Naive thymus-derived CD4-positive, alpha-beta T cell (primary cell): ENCODE measurements at regions of chr12 and their contacts with region 1.

Region 1: GRCh38 chr12:24838531-24838950 is 110.4 kb downstream of the BCAT1 start:
- DNase-seq: peak in 1 of 9 donors; percentile 28
- ATAC-seq: peak; percentile 61
- H3K4me3 ChIP-seq: no peak overlapping the region
- H3K4me3 Mint-ChIP-seq: peak overlapping the region in 1 of 10 donors; percentile 61
- H3K27ac ChIP-seq: no peak overlapping the region
- H3K27ac Mint-ChIP-seq: peak overlapping the region in 1 of 9 donors; percentile 46
- H3K4me1 ChIP-seq: no peaks in the 10 kb centered on the region
- H3K4me1 Mint-ChIP-seq: peaks cover 0 to 33% (median 0%) of the 10 kb centered on the region in 7 donors
- H3K27me3 ChIP-seq: no peaks in the 10 kb centered on the region
- H3K27me3 Mint-ChIP-seq: peaks cover 0 to 22% (median 15%) of the 10 kb centered on the region in 5 donors

Region 2: GRCh38 chr12:23204933-23205778 is 1633.4 kb before region 1 on chr12:
- CTCF ChIA-PET with region 1: interaction called, 3 read pairs
- POLR2A ChIA-PET with region 1: no interaction called
- intact Hi-C with region 1: loop called in 1 of 2 experiments (anchors 1 kb)
- DNase-seq: peak in 6 of 9 donors; percentile 5 to 29 (median 24)
- ATAC-seq: peak; percentile 70
- H3K4me3 ChIP-seq: no peak overlapping the region
- H3K4me3 Mint-ChIP-seq: no peak overlapping the region
- H3K27ac ChIP-seq: no peak overlapping the region
- H3K27ac Mint-ChIP-seq: no peak overlapping the region
- H3K4me1 ChIP-seq: no peaks in the 10 kb centered on the region
- H3K4me1 Mint-ChIP-seq: no peaks in the 10 kb centered on the region
- H3K27me3 ChIP-seq: no peaks in the 10 kb centered on the region
- H3K27me3 Mint-ChIP-seq: peaks cover 0 to 6% (median 5%) of the 10 kb centered on the region in 5 donors

Region 3: DNA sequence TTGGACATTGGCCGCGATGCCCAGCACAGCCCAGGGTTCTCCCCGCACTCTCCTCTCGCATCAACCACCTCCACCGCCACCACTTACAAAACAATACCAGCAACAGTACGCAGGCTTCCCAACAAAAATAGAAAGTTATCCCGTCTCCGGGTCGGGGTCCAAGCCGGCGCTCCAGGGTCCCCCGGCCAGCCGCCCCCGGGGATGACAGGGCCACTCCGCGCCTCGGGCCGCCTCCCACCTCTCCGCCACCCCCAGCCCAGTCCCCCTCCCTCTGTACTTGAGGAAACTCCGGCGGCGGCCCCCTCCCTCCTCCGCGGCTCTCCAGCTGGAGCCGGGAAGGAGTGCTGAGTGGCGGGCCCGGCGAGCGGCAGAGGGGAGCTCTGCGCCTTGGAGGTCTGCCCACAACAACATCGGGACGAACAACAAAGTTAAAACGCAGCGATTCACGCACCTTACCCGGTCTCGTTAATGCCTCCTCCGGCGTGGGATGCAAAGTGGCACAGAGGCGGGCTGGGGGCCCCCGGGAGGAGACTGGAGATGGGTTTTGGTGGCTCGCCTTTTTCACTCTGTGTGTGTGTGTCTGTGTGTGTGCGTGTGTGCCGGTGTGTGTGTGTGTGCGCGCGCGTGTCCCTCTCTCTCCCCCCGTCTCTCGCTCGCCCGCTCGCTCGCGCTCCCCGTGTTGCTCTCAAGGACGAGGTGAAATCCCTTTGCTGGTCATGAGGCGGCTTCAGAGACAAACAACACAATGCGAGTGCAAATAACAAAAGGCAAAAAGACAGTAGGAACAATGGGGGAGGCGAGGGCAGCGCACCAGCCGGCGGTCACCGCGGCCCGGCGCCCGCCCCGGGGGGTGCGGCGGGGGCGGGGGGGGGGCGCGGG is 276.4 kb before region 1 on chr12:
- CTCF ChIA-PET with region 1: no interaction called
- POLR2A ChIA-PET with region 1: no interaction called
- intact Hi-C with region 1: loop called in 1 of 2 experiments (anchors 5 kb)
- DNase-seq: peak in 2 of 9 donors; percentile 1 to 31
- ATAC-seq: peak; percentile 20
- H3K4me3 ChIP-seq: peak overlapping the region; percentile 39
- H3K4me3 Mint-ChIP-seq: peak overlapping the region; percentile 63 to 93 (median 82)
- H3K27ac ChIP-seq: no peak overlapping the region
- H3K27ac Mint-ChIP-seq: peak overlapping the region in 1 of 9 donors; percentile 65
- H3K4me1 ChIP-seq: no peaks in the 10 kb centered on the region
- H3K4me1 Mint-ChIP-seq: peaks cover 14 to 31% (median 25%) of the 10 kb centered on the region in 7 donors
- H3K27me3 ChIP-seq: peaks cover 0 to 8% of the 10 kb centered on the region in 2 donors
- H3K27me3 Mint-ChIP-seq: peaks cover 66 to 77% (median 70%) of the 10 kb centered on the region in 5 donors

Region 4: GRCh38 chr12:24798335-24798734 is 40.2 kb before region 1 on chr12:
- CTCF ChIA-PET with region 1: no interaction called
- POLR2A ChIA-PET with region 1: no interaction called
- intact Hi-C with region 1: loop called in 1 of 2 experiments (anchors 5 kb)
- DNase-seq: no peak
- ATAC-seq: no peak
- H3K4me3 ChIP-seq: no peak overlapping the region
- H3K4me3 Mint-ChIP-seq: no peak overlapping the region
- H3K27ac ChIP-seq: no peak overlapping the region
- H3K27ac Mint-ChIP-seq: no peak overlapping the region
- H3K4me1 ChIP-seq: peaks cover 0 to 8% of the 10 kb centered on the region in 2 donors
- H3K4me1 Mint-ChIP-seq: peaks cover 2 to 39% (median 22%) of the 10 kb centered on the region in 7 donors
- H3K27me3 ChIP-seq: no peaks in the 10 kb centered on the region
- H3K27me3 Mint-ChIP-seq: peaks cover 0 to 3% (median 0%) of the 10 kb centered on the region in 5 donors

Region 5: GRCh38 chr12:24902511-24903328 is 64.2 kb after region 1 on chr12:
- CTCF ChIA-PET with region 1: no interaction called
- POLR2A ChIA-PET with region 1: no interaction called
- intact Hi-C with region 1: loop called in 1 of 2 experiments (anchors 1 kb)
- DNase-seq: peak in 3 of 9 donors; percentile 5 to 59 (median 7)
- ATAC-seq: peak; percentile 42
- H3K4me3 ChIP-seq: peak overlapping the region; percentile 37
- H3K4me3 Mint-ChIP-seq: peak overlapping the region in 9 of 10 donors; percentile 60 to 99 (median 78)
- H3K27ac ChIP-seq: no peak overlapping the region
- H3K27ac Mint-ChIP-seq: peak overlapping the region in 1 of 9 donors; percentile 96
- H3K4me1 ChIP-seq: no peaks in the 10 kb centered on the region
- H3K4me1 Mint-ChIP-seq: peaks cover 9 to 41% (median 16%) of the 10 kb centered on the region in 7 donors
- H3K27me3 ChIP-seq: no peaks in the 10 kb centered on the region
- H3K27me3 Mint-ChIP-seq: peaks cover 13 to 39% (median 35%) of the 10 kb centered on the region in 5 donors

Region 6: DNA sequence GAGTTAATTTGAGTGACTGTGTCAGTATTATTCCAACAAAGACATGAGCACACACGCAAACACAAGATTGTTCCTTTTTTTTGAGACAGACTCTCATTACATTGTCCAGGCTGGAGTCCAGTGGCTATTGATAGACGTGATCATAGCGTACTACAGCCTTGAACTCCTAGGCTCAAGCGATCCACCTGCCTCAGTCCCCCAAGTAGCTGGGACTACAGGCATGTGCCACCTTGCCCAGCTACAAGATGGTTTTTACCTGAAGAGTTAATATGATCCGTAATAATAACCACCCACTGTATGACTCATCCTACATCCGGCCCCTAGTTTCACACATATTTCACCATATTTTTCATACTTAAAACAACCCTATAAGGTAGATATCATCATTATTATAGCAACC is 83.5 kb after region 1 on chr12:
- CTCF ChIA-PET with region 1: no interaction called
- POLR2A ChIA-PET with region 1: no interaction called
- intact Hi-C with region 1: no loop called
- DNase-seq: no peak
- ATAC-seq: peak; percentile 38
- H3K4me3 ChIP-seq: no peak overlapping the region
- H3K4me3 Mint-ChIP-seq: no peak overlapping the region
- H3K27ac ChIP-seq: no peak overlapping the region
- H3K27ac Mint-ChIP-seq: no peak overlapping the region
- H3K4me1 ChIP-seq: no peaks in the 10 kb centered on the region
- H3K4me1 Mint-ChIP-seq: peaks cover 0 to 21% (median 0%) of the 10 kb centered on the region in 7 donors
- H3K27me3 ChIP-seq: no peaks in the 10 kb centered on the region
- H3K27me3 Mint-ChIP-seq: peaks cover 0 to 8% (median 0%) of the 10 kb centered on the region in 5 donors

Region 7: DNA sequence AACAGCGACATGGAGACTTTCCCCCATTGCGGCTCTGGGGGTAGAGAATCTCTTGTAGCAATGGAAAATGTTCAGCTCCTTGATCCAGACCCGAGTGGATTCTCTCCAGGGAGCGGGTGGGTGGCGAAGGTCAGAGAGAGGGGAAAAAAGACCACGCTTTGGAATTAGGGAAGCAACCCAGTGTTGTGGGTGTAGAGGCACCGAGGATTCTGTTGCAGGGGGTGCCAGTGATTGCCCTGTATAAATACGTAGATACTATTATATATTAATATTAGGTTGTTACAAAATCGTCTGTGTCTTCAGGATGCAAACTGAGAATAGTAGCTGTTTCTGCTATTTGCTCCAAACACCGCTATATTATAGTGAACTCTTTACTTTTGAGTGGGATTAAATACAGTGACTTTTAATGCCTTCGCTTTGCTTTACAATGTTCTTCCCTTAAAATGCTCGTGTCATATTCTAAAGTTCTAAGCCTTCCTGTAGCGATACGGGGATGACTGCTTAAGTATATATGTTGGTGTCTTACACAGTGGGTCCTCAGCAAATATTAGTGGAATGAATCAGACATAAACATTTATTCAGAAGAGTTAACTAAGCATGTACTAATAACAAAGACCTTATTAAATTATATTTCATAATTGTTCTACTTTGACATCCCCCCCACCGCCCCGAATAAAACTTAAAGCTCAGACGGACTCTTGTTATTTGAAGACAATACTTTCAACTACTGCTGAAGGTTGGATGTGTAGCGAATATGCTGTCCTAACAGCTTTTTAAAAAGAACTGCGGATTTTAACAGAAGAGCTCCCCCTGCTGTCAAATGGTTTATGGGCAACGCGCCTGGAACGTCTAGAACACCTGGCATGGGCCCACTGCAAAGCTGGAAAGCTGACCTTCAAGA is 548.5 kb after region 1 on chr12:
- CTCF ChIA-PET with region 1: no interaction called
- POLR2A ChIA-PET with region 1: no interaction called
- intact Hi-C with region 1: no loop called
- DNase-seq: peak; percentile 48 to 86 (median 83)
- ATAC-seq: peak; percentile 18
- H3K4me3 ChIP-seq: peak overlapping the region; percentile 97
- H3K4me3 Mint-ChIP-seq: peak overlapping the region; percentile 90 to 100 (median 96)
- H3K27ac ChIP-seq: peak overlapping the region; percentile 98
- H3K27ac Mint-ChIP-seq: peak overlapping the region; percentile 91 to 100 (median 100)
- H3K4me1 ChIP-seq: peaks cover 19 to 24% of the 10 kb centered on the region in 2 donors
- H3K4me1 Mint-ChIP-seq: peaks cover 13 to 61% (median 35%) of the 10 kb centered on the region in 7 donors
- H3K27me3 ChIP-seq: no peaks in the 10 kb centered on the region
- H3K27me3 Mint-ChIP-seq: peaks cover 0 to 2% (median 0%) of the 10 kb centered on the region in 5 donors